Sigmoid colon (tissue), 7 donors: ENCODE measurements at regions of chrX and their contacts with region 1.

Region 1: DNA sequence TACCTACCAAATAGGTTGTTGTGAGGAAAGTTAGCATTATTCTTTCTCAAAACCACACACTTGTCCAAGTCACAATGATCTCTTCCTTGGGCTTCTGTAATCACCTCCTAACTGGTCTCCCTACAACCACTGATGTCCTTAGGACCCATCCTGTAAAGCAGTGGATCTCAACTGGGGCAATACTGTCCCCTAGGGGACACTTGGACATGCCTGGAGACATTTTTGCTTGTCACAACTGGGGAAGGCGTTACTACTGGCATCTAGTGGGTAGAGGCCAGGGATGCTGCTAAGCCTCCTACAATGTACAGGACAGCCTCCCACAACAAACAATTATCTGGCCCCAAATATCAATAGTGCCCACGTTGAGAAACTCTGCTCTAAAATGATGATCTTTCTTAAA is 118.7 kb upstream of the AP1S2 start:
- DNase-seq: no peak
- H3K4me3 ChIP-seq: no peak overlapping the region
- H3K27ac ChIP-seq: no peak overlapping the region
- H3K4me1 ChIP-seq: no peaks in the 10 kb centered on the region
- H3K27me3 ChIP-seq: no peaks in the 10 kb centered on the region
- CTCF ChIP-seq: no peak
- EP300 ChIP-seq: no peak
- POLR2A ChIP-seq: no peak

Region 2: DNA sequence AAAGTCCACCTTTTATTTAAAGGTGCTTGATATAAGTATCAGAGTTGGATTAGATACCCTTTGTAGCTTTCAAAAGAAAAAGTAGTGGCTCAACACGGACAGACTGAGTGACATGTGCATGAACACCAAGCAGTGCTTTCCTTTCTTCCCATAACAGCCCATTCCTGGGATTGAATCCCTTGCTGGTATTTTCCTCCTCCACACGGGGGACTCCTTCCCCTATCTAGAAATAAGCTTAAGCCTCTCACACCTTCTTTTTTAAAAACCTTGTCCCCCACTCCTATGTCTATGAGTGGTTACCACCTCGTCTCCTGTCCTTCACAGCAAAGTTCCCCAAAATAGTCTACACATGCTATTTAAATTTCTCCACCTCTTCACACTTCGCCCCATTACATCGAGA is 123.7 kb before region 1 on chrX:
- intact Hi-C with region 1: loop called (anchors 10 kb)
- DNase-seq: no peak
- H3K4me3 ChIP-seq: no peak overlapping the region
- H3K27ac ChIP-seq: peak overlapping the region in 3 of 4 donors; percentile 6 to 33 (median 27)
- H3K4me1 ChIP-seq: peaks cover 0 to 13% (median 2%) of the 10 kb centered on the region in 4 donors
- H3K27me3 ChIP-seq: peaks cover 0 to 3% (median 0%) of the 10 kb centered on the region in 3 donors
- CTCF ChIP-seq: peak in 1 of 4 experiments; percentile 21
- EP300 ChIP-seq: no peak
- POLR2A ChIP-seq: no peak